Esophagus muscularis mucosa (tissue), 4 donors: ENCODE measurements at regions of chr11 and their contacts with region 1.

Region 1: GRCh38 chr11:61187505-61188130 is 15.7 kb upstream of the PGA3 start:
- DNase-seq: peak; percentile 94
- H3K4me3 ChIP-seq: no peak overlapping the region
- H3K27ac ChIP-seq: no peak overlapping the region
- H3K4me1 ChIP-seq: no peaks in the 10 kb centered on the region
- H3K27me3 ChIP-seq: peaks cover 0 to 31% (median 0%) of the 10 kb centered on the region in 4 donors
- CTCF ChIP-seq: peak; percentile 88 to 94 (median 91)
- EP300 ChIP-seq: no peak
- POLR2A ChIP-seq: no peak

Region 2: DNA sequence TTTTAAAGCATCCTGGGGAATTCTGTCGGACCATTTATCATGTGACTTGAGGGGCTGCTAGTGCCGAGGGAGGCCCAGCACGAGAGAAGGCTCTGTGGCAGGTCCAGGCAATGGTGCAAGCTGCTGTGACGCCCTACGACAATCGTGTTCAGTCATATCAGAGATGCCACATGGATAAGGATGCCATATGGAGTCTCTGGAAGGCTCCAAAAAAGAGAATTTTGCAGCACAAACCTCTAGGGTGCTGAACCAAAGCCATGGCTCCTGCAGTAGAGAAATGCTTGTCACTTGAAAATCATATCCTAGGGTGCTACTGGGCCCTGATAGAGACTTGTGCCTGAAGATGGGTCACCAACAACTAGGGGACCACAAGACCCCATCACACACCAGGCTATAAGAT is 222.8 kb before region 1 on chr11:
- intact Hi-C with region 1: loop called (anchors 5 kb)
- DNase-seq: no peak
- H3K4me3 ChIP-seq: no peak overlapping the region
- H3K27ac ChIP-seq: no peak overlapping the region
- H3K4me1 ChIP-seq: peaks cover 0 to 7% (median 0%) of the 10 kb centered on the region in 4 donors
- H3K27me3 ChIP-seq: no peaks in the 10 kb centered on the region
- CTCF ChIP-seq: no peak
- EP300 ChIP-seq: no peak
- POLR2A ChIP-seq: no peak